Panc1 (cell line): ENCODE measurements at regions of chr1 and their contacts with region 1.

Region 1: DNA sequence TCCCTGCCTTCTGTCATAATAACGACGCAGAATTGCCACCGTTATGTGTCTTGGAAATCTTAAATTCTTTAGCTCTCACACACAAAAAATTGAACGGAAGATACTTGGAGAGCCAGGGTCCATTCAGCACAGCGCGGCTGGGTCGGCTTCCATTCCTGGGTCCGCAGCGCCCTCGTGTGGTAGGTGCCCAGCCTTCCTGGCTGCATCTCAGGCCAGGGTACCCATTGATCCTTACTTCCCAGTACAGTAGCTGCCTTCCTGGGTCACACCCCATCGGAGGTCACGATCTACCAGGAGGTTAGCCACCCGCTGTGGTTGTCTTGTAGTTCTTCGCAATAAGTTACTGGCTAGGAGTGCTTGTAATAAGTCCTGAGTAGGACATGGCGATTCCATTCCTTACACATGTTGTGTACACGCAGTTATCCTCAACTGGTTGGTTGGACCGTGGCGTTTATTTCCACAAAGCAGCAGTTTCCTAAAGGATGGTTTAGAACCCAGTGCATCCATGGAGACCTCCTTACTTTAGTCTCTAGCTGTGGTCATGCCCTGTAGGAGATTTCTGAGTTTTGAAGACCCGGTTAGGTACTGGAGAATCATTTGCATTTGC is 9.9 kb upstream of the MTARC1 start:
- DNase-seq: peak; percentile 28
- ATAC-seq: peak; percentile 100
- H3K4me3 ChIP-seq: no peak overlapping the region
- H3K27ac ChIP-seq: no peak overlapping the region
- H3K4me1 ChIP-seq: no peaks in the 10 kb centered on the region
- H3K27me3 ChIP-seq: no peaks in the 10 kb centered on the region
- CTCF ChIP-seq: peak; percentile 97

Region 2: GRCh38 chr1:220281159-220281574 is 495.7 kb before region 1 on chr1:
- CTCF ChIA-PET with region 1: interaction called, 6 read pairs
- POLR2A ChIA-PET with region 1: no interaction called
- in situ Hi-C with region 1: no loop called
- intact Hi-C with region 1: loop called (anchors 1 kb)
- DNase-seq: no peak
- ATAC-seq: peak; percentile 72; the same call in 1 of the 2 replicates
- H3K4me3 ChIP-seq: no peak overlapping the region
- H3K27ac ChIP-seq: no peak overlapping the region
- H3K4me1 ChIP-seq: no peaks in the 10 kb centered on the region
- H3K27me3 ChIP-seq: peaks cover 25% of the 10 kb centered on the region
- CTCF ChIP-seq: peak; percentile 72

Region 3: DNA sequence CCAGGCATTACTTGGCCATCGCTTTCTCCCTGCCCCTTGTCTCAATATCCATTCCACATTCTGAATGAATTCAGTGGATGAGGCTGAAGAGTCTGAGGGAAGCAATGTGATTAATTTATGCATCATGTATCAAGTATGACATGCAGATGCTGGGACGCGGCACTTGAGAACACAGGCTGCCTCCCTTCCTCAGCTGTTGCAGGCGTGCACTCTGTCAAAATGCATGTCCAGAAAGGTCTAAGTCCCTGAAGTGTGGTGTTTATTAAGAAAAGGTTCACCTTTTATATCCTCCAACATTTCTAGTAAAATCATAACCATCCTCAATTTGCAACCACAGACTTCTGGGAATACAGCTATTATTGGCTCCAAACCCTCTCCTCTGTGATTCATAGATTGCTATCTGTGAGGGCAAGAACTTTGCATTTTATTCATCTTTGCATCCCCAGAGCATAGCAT is 481.9 kb before region 1 on chr1:
- CTCF ChIA-PET with region 1: no interaction called
- POLR2A ChIA-PET with region 1: no interaction called
- in situ Hi-C with region 1: no loop called
- intact Hi-C with region 1: loop called (anchors 5 kb)
- DNase-seq: no peak
- ATAC-seq: no peak
- H3K4me3 ChIP-seq: no peak overlapping the region
- H3K27ac ChIP-seq: no peak overlapping the region
- H3K4me1 ChIP-seq: no peaks in the 10 kb centered on the region
- H3K27me3 ChIP-seq: peaks cover 8% of the 10 kb centered on the region; the same call in 1 of the 2 replicates
- CTCF ChIP-seq: no peak

Region 4: GRCh38 chr1:220527908-220528678 is 248.7 kb before region 1 on chr1 and contains the start of gene MARK1:
- CTCF ChIA-PET with region 1: no interaction called
- POLR2A ChIA-PET with region 1: no interaction called
- in situ Hi-C with region 1: no loop called
- intact Hi-C with region 1: loop called (anchors 10 kb)
- DNase-seq: no peak
- ATAC-seq: peak; percentile 89
- H3K4me3 ChIP-seq: peak within 1 kb of the TSS; percentile 55 to 56
- H3K27ac ChIP-seq: no peak within 1 kb of the TSS
- H3K4me1 ChIP-seq: no peaks in the 10 kb centered on the region
- H3K27me3 ChIP-seq: peaks cover 56% of the 10 kb centered on the region
- CTCF ChIP-seq: no peak
- total RNA-seq, gene MARK1: not detected

Region 5: DNA sequence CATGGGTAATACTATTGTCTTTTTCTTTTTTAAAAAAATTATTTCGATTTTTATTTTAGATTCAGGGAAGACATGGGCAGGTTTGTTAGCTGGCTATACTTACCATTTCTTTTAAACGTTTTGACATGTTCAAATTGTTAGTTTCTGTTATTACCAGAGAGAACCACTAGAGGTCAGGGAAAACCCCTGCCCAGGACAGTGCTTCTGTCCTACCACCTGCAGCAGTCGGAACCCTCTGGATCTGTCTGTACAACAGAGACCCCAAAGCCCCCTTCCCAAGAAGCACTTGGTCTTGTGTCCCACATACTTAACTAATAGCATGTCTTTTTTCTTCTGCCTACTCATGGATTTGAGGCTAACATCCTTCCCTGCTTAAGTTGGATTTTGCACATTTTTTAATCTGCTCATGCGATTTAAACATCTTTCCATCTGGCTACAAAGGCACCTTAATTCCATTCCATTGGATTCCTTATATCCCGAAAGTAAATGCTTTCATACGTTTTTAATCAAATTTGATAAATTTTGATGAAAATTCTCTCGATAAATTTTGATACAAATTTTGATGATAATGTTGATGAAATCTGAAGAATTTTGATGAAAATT is 96.6 kb before region 1 on chr1:
- CTCF ChIA-PET with region 1: no interaction called
- POLR2A ChIA-PET with region 1: no interaction called
- in situ Hi-C with region 1: no loop called
- intact Hi-C with region 1: loop called (anchors 2 kb)
- DNase-seq: peak; percentile 41
- ATAC-seq: peak; percentile 86
- H3K4me3 ChIP-seq: no peak overlapping the region
- H3K27ac ChIP-seq: no peak overlapping the region
- H3K4me1 ChIP-seq: 0 out of 2 replicates have a peak, but pooled peaks cover 2% of the 10 kb centered on the region
- H3K27me3 ChIP-seq: no peaks in the 10 kb centered on the region
- CTCF ChIP-seq: peak; percentile 92

Region 6: DNA sequence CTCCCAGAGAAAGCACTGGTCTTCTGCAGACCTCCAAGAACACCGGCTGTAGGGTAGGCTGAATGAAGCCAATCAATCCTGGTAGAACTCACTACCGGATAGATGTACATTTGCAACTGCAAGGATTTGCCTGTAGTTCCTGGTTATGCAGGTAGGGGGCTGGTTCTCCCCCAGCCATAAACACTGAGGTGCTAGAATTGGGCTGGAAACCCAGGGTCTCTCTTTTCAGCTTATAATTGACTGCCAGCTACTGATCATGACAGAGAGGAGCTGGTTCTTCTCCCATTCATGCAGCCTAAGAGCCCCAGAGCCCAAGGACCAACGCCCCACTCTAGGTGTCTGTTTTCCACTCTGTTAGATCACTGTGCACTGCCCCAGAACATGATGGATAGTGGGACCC is 50.2 kb before region 1 on chr1:
- CTCF ChIA-PET with region 1: interaction called, 12 read pairs
- POLR2A ChIA-PET with region 1: no interaction called
- in situ Hi-C with region 1: no loop called
- intact Hi-C with region 1: no loop called
- DNase-seq: no peak
- ATAC-seq: no peak
- H3K4me3 ChIP-seq: no peak overlapping the region
- H3K27ac ChIP-seq: no peak overlapping the region
- H3K4me1 ChIP-seq: no peaks in the 10 kb centered on the region
- H3K27me3 ChIP-seq: no peaks in the 10 kb centered on the region
- CTCF ChIP-seq: peak; percentile 34

Region 7: DNA sequence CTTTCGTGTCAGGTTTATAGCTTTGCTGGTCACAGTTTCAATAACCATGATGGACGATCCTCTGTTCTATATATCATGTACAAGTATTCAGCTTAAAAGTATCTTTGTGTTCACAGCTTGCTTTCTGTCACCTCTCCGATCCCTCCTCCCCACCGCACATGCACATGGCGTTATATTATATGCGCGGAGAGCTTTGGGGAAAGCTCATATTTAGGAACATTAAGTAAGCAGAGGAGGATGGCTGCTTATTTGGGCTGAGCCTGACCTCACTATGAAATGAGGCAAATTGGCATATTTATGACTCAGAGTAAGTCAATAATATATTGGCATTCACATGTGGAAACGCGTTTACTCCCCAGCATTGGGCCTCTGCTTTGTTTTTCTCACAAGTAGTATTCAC is 463.0 kb after region 1 on chr1:
- CTCF ChIA-PET with region 1: no interaction called
- POLR2A ChIA-PET with region 1: no interaction called
- in situ Hi-C with region 1: no loop called
- intact Hi-C with region 1: no loop called
- DNase-seq: no peak
- ATAC-seq: no peak
- H3K4me3 ChIP-seq: no peak overlapping the region
- H3K27ac ChIP-seq: no peak overlapping the region
- H3K4me1 ChIP-seq: no peaks in the 10 kb centered on the region
- H3K27me3 ChIP-seq: no peaks in the 10 kb centered on the region
- CTCF ChIP-seq: no peak

Region 8: GRCh38 chr1:221274373-221274772 is 497.6 kb after region 1 on chr1:
- CTCF ChIA-PET with region 1: no interaction called
- POLR2A ChIA-PET with region 1: no interaction called
- in situ Hi-C with region 1: no loop called
- intact Hi-C with region 1: no loop called
- DNase-seq: no peak
- ATAC-seq: no peak
- H3K4me3 ChIP-seq: no peak overlapping the region
- H3K27ac ChIP-seq: no peak overlapping the region
- H3K4me1 ChIP-seq: no peaks in the 10 kb centered on the region
- H3K27me3 ChIP-seq: no peaks in the 10 kb centered on the region
- CTCF ChIP-seq: no peak